Common myeloid progenitor, CD34-positive (primary cell): ENCODE measurements at regions of chr17 and their contacts with region 1.

Region 1: DNA sequence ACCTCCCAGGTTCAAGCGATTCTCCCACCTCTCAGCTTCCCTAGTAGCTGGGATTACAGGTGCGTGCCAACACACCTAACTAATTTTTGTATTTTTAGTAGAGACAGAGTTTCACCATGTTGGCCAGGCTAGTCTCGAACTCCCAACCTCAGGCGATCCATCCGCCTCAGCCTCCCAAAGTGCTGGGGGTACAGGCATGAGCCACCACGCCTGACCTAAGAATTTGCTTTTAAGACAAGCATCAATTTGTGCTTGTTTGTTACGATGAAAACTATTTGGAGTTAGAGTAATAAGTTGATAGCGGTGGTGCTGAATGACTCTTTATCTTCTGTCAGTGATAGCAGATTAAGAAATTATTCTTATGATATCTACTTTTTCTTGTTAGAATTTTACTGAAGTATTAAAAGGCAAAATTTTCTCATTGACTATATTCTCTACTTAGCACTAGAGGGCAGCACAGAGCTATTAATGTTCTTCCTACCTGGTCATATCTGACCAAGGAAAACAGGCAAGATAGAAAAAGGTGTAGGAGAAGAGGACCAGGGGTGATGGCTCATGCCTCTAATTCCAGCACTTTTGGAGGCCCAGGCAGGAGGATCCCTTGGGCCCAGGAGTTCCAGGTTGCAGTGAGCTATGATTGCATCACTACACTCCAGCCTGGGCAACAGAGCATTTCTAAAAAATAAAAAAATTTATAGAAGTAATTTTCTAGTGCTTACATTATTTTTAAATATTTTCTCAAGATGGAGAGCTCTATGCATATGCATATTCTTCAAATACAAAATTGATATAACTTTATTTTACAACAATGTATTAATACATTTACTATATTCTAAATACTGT is 24.5 kb downstream of the STXBP4 start:
- DNase-seq: peak; percentile 65 to 78 (median 72)
- H3K4me3 ChIP-seq: no peak overlapping the region
- H3K27ac ChIP-seq: no peak overlapping the region
- H3K4me1 ChIP-seq: no peaks in the 10 kb centered on the region
- H3K27me3 ChIP-seq: no peaks in the 10 kb centered on the region

Region 2: GRCh38 chr17:55005520-55005919 is 12.5 kb after region 1 on chr17:
- CTCF ChIA-PET with region 1: interaction called, 19 read pairs
- POLR2A ChIA-PET with region 1: no interaction called
- DNase-seq: peak; percentile 31 to 53 (median 41)
- H3K4me3 ChIP-seq: no peak overlapping the region
- H3K27ac ChIP-seq: no peak overlapping the region
- H3K4me1 ChIP-seq: peaks cover 0 to 2% (median 1%) of the 10 kb centered on the region in 4 experiments
- H3K27me3 ChIP-seq: no peaks in the 10 kb centered on the region

Region 3: DNA sequence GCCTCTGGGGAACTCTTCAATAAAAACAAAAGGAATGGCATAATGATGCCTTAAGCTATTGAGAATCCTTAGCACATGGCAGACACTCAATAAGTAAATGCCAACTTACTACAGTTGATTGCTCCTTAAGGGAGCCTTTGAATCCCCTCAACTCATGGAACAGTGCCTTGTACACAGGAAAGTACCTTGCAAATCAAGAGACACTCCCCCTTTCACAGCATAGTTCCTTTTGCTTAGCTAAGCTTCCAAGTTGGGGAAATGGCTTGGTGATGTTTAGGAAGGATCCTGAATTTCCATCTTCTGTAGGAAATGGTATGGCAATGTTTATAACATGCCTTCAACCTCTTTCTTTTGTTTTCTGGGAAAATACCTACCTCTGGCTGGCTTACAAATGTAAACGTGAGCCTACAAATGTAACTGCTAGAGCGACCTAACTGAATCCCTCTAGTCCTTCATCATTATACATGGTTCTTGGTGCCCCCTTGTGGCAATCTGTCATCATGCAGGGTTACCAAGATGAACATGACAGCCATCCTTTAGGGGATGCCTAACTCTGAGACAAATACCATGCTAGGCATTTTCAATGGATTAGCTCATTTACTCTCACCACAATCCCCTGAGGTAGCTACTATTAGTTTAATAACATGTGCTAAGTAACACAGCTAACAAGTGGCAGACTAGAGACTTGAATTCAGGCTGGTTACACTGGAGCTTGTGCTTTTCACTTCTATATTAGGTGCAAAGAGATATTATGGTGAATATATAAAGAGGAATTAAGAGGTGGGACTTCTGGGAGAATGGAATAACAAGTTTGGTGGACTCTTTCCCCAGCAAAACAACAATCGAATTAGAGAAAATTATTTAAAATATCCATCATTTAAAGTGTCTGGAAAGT is 363.7 kb after region 1 on chr17:
- CTCF ChIA-PET with region 1: interaction called, 190 read pairs
- POLR2A ChIA-PET with region 1: interaction called, 3 read pairs
- DNase-seq: peak; percentile 78 to 87 (median 83)
- H3K4me3 ChIP-seq: no peak overlapping the region
- H3K27ac ChIP-seq: no peak overlapping the region
- H3K4me1 ChIP-seq: peaks cover 0 to 2% (median 0%) of the 10 kb centered on the region in 4 experiments
- H3K27me3 ChIP-seq: no peaks in the 10 kb centered on the region